Breast epithelium (tissue), 4 donors: ENCODE measurements at regions of chr14 and their contacts with region 1.

Region 1: DNA sequence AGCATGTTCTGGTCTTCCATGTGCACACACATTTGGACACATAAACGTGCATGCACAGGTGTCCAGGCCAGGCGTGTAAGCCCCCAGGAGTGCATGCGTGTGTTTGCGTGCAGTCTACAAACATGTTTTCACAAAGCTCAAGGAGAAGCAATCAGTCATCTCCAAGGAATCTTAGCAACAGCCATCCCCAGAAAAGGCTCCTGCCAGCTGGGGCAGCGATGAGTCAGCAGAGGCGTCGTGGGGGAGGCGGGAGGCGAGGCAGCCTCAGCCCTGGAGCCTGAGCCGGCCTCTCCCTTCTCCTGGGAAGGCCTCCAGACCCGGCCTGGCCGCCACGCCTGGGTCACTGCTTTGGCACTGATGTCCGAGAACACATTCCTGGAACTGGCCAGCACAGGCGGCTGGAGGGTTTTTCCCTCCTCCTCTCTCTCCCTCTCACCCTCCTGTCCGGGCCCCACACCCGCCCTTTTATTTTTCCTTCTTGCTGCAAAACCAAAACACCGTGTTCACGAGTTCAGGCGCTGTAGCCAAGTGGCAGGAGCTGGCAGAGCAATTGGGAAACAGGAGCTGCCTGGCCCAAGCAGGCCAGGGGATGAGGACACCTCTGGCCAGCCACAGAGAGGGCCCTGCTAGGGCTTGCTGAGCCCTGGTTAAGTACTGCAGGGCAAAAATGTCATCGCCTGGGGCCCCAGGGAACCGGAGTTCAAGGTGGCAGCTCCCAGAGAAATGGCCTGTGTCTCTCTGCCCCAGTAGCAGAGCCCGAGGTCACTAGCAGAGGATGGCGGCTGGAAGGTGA is 92.7 kb downstream of the LRRC74A start:
- DNase-seq: peak; percentile 94 to 95
- H3K4me3 ChIP-seq: peak overlapping the region in 2 of 3 donors; percentile 13 to 27
- H3K27ac ChIP-seq: peak overlapping the region; percentile 87 to 88
- H3K4me1 ChIP-seq: peaks cover 24 to 34% of the 10 kb centered on the region in 2 donors
- H3K27me3 ChIP-seq: no peaks in the 10 kb centered on the region
- CTCF ChIP-seq: peak in 1 of 3 donors; percentile 55
- POLR2A ChIP-seq: no peak

Region 2: GRCh38 chr14:77028384-77029231 is 109.7 kb after region 1 on chr14 and contains the start of gene IRF2BPL:
- intact Hi-C with region 1: loop called (anchors 1 kb)
- DNase-seq: peak; percentile 98 to 99
- H3K4me3 ChIP-seq: peak within 1 kb of the TSS; percentile 91 to 95 (median 94)
- H3K27ac ChIP-seq: peak within 1 kb of the TSS; percentile 99
- H3K4me1 ChIP-seq: peaks cover 19 to 31% of the 10 kb centered on the region in 2 donors
- H3K27me3 ChIP-seq: no peaks in the 10 kb centered on the region
- CTCF ChIP-seq: peak in 1 of 3 donors; percentile 13
- POLR2A ChIP-seq: peak; percentile 74
- total RNA-seq, gene IRF2BPL: 39.5 to 76.5 (median 47.2) TPM

Region 3: GRCh38 chr14:77053046-77053841 is 134.3 kb after region 1 on chr14:
- intact Hi-C with region 1: loop called (anchors 10 kb)
- DNase-seq: peak in 1 of 2 donors; percentile 63
- H3K4me3 ChIP-seq: no peak overlapping the region
- H3K27ac ChIP-seq: peak overlapping the region; percentile 82 to 91
- H3K4me1 ChIP-seq: peaks cover 5 to 7% of the 10 kb centered on the region in 2 donors
- H3K27me3 ChIP-seq: no peaks in the 10 kb centered on the region
- CTCF ChIP-seq: peak; percentile 61 to 91 (median 91)
- POLR2A ChIP-seq: no peak